ENCODE measurements at regions of chr3 and their contacts with region 1.

Region 1: DNA sequence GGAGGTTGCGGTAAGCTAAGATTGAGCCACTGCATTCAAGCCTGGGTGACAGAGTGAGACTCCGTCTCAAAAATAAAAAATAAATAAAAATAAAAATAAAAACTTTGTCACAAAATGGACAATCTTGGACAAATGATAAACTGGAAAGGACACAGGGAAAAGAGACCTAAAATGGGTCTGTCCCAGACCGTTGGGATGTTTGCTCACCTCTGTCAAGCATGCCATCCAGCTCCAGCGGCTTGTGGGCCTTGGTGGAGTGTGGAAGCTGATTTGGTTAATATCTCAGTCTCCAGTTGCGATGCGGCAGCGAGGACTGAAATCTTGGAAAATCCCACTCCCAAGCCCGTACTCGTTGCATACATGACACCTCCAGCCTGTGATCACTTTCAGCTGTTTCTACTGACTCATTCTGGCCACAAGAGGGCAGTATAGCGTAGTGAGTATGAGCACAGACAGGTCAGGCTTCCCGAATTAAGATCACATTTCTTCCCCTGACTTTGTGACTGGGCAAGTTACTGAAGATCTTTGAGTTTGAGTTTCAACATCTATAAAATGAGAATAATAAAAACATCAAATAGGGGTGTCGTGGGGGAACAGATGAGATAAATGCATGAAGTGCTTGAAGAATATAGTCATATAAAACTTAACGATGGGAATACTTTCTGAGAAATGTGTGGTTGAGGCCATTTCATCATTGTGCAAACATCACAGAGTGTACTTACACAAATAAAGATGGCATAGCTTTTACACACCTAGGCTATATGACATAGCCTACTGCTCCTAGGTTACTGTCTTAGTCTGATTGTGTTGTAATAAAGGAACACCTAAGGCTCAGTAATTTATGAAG is 19.6 kb upstream of the MOBP start:
- DNase-seq: no peak
- ATAC-seq: peak; percentile 93

Region 2: DNA sequence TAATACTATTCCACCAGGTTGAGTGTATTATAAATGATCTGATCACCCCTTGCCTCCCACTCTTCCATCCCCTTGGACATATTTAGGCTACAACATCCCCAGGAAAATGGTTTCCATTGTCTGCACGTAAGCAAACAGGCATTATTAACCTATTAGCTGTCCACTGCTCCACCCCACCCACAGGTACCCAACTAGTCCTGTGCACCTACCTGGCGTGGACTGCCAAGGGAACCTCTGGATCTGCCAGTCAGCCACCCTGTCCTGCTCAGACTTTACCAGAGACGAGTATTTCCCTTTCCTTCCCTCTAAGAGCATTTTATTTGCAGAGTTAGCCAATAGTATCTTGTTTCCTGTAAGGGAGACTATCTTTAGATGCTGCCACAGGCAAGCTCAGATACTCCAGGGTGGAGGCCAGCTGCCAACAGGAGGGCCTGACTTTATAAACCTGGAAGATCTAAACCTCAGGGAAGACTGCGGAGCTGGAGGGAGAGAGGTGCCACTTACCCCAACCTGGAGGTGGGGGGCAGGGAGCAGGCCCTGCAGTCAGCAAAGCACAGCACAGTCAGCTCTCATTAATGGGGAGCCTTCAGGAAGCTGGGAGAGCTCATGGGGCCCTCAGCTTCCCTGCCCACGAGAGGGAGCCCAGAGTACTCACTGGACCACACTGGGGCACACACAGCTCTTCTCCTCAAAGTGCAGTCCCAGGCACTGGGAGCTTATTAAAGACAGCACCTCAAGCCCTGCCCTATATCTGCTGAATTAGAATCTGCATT is 167.9 kb before region 1 on chr3 and contains the start of gene CX3CR1:
- intact Hi-C with region 1: no loop called
- DNase-seq: no peak
- ATAC-seq: peak; percentile 73
- total RNA-seq, gene CX3CR1: 1.7 TPM

Region 3: GRCh38 chr3:39499651-39500240 is 51.9 kb after region 1 on chr3:
- intact Hi-C with region 1: loop called (anchors 2 kb)
- DNase-seq: no peak
- ATAC-seq: no peak

Region 4: GRCh38 chr3:39651993-39652739 is 204.3 kb after region 1 on chr3:
- intact Hi-C with region 1: no loop called
- DNase-seq: no peak
- ATAC-seq: no peak

Measured in left ventricle myocardium superior (tissue), 1 donor.